ENCODE measurements at regions of chr4 and their contacts with region 1.

Region 1: GRCh38 chr4:83284193-83285054 is at the start of gene COQ2:
- DNase-seq: peak; percentile 82 to 97 (median 92)
- ATAC-seq: peak; percentile 92 to 94 (median 94)
- H3K4me3 ChIP-seq: peak within 1 kb of the TSS; percentile 76 to 86
- H3K4me3 Mint-ChIP-seq: peak within 1 kb of the TSS; percentile 94 to 99 (median 97)
- H3K27ac ChIP-seq: peak within 1 kb of the TSS; percentile 83
- H3K27ac Mint-ChIP-seq: peak within 1 kb of the TSS; percentile 96 to 98
- H3K4me1 ChIP-seq: peaks cover 6 to 9% of the 10 kb centered on the region in 2 experiments
- H3K4me1 Mint-ChIP-seq: peaks cover 39 to 42% (median 40%) of the 10 kb centered on the region in 3 donors
- H3K27me3 ChIP-seq: no peaks in the 10 kb centered on the region
- H3K27me3 Mint-ChIP-seq: no peaks in the 10 kb centered on the region
- total RNA-seq, gene COQ2: 4.7 to 9.7 (median 6.2) TPM

Region 2: GRCh38 chr4:82851885-82852750 is 432.3 kb before region 1 on chr4:
- CTCF ChIA-PET with region 1: interaction called in 1 of 2 experiments, 11 read pairs
- POLR2A ChIA-PET with region 1: no interaction called
- DNase-seq: peak in 1 of 35 experiments; percentile 59
- ATAC-seq: no peak
- H3K4me3 ChIP-seq: no peak overlapping the region
- H3K4me3 Mint-ChIP-seq: no peak overlapping the region
- H3K27ac ChIP-seq: no peak overlapping the region
- H3K27ac Mint-ChIP-seq: peak overlapping the region; percentile 17 to 45
- H3K4me1 ChIP-seq: no peaks in the 10 kb centered on the region
- H3K4me1 Mint-ChIP-seq: peaks cover 0 to 4% (median 2%) of the 10 kb centered on the region in 3 donors
- H3K27me3 ChIP-seq: no peaks in the 10 kb centered on the region
- H3K27me3 Mint-ChIP-seq: no peaks in the 10 kb centered on the region

Region 3: DNA sequence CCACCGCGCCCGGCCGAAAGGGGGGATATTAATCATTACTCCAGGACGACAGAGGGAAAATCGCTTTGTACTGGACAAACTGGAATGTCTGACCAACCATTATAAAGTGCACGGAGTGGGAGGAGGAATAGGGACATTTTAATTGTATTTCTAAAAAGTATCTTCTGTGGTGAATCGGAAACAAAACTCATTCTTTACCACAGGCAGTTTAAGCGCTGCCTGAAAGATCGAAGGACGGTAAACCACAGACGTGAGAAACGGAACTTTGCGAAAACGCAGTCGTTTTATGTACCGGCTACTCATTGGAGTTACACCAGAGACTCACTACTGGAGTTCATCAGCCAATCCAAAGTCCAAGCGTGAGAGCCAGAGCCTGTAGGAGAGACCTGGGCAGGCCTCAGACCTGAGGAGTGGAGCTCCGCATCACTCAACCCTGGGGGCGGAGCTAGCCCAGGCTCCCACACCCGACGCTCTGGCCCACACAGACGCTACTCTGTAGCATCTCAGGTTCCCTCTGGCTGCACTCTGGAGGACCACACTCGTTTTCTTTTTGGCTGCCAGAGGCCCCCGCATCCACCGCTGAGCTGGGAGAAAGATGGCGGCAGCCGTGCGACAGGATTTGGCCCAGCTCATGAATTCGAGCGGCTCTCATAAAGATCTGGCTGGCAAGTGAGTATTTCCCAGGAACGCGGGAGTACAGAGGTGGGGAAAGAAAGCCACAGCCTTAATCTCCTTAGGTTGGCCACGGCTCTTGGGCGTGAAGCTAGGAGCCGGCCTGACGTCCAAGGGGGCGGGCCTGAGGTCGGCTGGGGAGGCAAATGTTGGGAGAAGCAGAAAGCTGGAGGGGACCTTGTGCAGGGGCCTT is 249.6 kb before region 1 on chr4 and contains the start of gene COPS4:
- CTCF ChIA-PET with region 1: interaction called, 7 to 16 read pairs
- POLR2A ChIA-PET with region 1: interaction called, 4 to 6 read pairs
- DNase-seq: peak; percentile 80 to 99 (median 95)
- ATAC-seq: peak; percentile 96 to 99 (median 96)
- H3K4me3 ChIP-seq: peak within 1 kb of the TSS; percentile 73 to 92
- H3K4me3 Mint-ChIP-seq: peak within 1 kb of the TSS; percentile 94 to 99 (median 97)
- H3K27ac ChIP-seq: peak within 1 kb of the TSS; percentile 77
- H3K27ac Mint-ChIP-seq: peak within 1 kb of the TSS; percentile 96 to 99
- H3K4me1 ChIP-seq: peaks cover 10 to 13% of the 10 kb centered on the region in 2 experiments
- H3K4me1 Mint-ChIP-seq: peaks cover 40 to 41% (median 40%) of the 10 kb centered on the region in 3 donors
- H3K27me3 ChIP-seq: no peaks in the 10 kb centered on the region
- H3K27me3 Mint-ChIP-seq: no peaks in the 10 kb centered on the region
- total RNA-seq, gene COPS4: 19.9 to 28.3 (median 22.2) TPM

Region 4: DNA sequence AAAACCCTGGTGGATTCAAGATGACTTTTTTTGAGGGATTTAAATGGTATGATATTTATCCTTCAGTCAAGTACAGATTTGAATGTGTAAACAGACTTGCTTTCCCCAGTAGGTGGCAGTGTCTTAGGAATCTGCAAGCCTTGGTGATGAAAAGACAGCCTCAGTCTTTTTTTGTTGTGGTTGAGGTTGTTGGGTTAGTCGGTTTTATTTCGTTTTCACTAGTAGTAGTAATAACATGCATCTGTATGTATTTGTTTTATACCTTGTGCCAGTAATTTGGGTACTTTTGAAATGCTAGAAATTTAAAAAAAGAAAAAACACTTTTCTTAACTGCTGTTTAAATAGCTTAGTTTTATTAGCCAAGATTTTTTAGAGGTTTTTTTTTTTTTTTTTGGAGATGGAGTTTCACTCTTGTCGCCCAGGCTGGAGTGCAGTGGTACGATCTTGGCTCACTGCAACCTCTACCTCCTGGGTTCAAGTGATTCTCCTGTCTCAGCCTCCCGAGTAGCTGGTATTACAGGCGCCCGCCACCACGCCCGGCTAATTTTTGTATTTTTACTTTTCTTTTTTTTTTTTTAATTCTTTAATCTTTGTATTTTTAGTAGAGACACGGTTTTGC is 210.2 kb before region 1 on chr4:
- CTCF ChIA-PET with region 1: interaction called, 5 to 71 read pairs
- POLR2A ChIA-PET with region 1: interaction called in 1 of 2 experiments, 5 read pairs
- DNase-seq: peak in 30 of 35 experiments; percentile 14 to 92 (median 54)
- ATAC-seq: peak; percentile 89 to 97 (median 92)
- H3K4me3 ChIP-seq: no peak overlapping the region
- H3K4me3 Mint-ChIP-seq: peak overlapping the region; percentile 47 to 67 (median 55)
- H3K27ac ChIP-seq: no peak overlapping the region
- H3K27ac Mint-ChIP-seq: peak overlapping the region; percentile 49 to 81
- H3K4me1 ChIP-seq: peaks cover 0 to 7% of the 10 kb centered on the region in 2 experiments
- H3K4me1 Mint-ChIP-seq: peaks cover 5 to 28% (median 18%) of the 10 kb centered on the region in 3 donors
- H3K27me3 ChIP-seq: no peaks in the 10 kb centered on the region
- H3K27me3 Mint-ChIP-seq: no peaks in the 10 kb centered on the region

Region 5: DNA sequence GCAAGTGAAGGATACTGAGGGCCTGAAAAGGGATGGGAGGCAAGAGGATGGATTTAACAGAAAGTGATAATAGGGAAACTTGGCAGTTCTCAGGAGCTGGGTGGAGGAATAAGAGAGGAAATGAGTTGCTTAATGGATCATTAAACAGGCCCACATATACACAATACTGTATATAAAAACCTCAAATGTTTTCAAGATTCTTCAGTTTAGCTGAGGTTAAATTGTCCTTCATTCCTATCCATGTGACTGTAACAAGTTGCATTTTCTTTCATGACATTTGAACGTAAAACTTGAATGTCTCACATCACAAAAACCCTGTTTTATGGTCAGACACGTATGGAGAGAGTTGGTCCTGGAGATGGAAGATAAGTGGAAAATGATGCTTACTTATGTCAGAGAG is 93.4 kb before region 1 on chr4:
- CTCF ChIA-PET with region 1: no interaction called
- POLR2A ChIA-PET with region 1: no interaction called
- DNase-seq: no peak
- ATAC-seq: no peak
- H3K4me3 ChIP-seq: no peak overlapping the region
- H3K4me3 Mint-ChIP-seq: no peak overlapping the region
- H3K27ac ChIP-seq: no peak overlapping the region
- H3K27ac Mint-ChIP-seq: no peak overlapping the region
- H3K4me1 ChIP-seq: no peaks in the 10 kb centered on the region
- H3K4me1 Mint-ChIP-seq: peaks cover 2 to 20% (median 11%) of the 10 kb centered on the region in 3 donors
- H3K27me3 ChIP-seq: no peaks in the 10 kb centered on the region
- H3K27me3 Mint-ChIP-seq: no peaks in the 10 kb centered on the region

Region 6: DNA sequence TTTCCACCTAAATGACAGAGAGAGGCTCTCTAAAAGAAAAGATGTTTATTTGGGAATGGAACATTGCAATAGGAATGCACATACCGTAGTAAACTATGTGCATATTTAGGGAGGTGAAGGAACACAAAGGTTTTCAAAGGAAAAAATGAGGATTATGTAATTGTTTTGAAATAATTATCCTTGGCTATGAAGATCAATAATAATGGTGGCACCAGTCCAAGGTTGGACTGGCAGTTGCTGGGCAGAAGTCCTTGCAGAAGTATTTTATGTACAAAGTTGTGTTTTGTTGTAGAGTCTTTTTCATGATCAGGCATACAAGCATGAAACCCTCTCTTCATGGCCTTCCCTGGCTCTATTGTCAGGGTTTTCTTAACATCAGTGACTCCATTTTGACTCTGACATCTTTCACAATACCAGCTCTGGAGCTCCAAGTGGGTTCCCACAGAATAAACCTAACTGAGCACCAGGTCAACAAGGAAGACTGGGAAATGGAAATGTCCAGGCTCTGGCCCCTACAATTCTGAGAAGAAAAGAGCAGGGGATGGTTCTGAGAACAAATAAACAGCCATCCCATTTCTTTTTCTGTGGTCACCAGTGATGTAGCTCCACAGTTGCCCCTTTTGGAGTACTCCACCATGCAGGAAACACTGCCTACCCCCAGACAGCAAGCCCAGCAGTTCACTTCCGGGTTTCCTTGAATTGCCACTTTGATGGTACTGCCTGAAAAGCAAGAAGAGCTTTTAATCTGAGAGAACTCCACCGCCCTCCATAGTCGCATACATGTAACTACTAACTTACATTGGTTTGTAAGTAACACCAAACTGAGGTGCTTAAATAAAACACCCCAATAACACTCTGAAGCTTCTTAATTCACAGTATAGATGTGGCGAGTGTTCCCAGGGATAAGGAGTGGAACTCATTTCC is 103.6 kb after region 1 on chr4:
- CTCF ChIA-PET with region 1: interaction called, 3 to 11 read pairs
- POLR2A ChIA-PET with region 1: no interaction called
- DNase-seq: peak in 28 of 35 experiments; percentile 1 to 55 (median 19)
- ATAC-seq: peak; percentile 63 to 93 (median 84)
- H3K4me3 ChIP-seq: no peak overlapping the region
- H3K4me3 Mint-ChIP-seq: no peak overlapping the region
- H3K27ac ChIP-seq: no peak overlapping the region
- H3K27ac Mint-ChIP-seq: peak overlapping the region; percentile 31 to 58
- H3K4me1 ChIP-seq: peaks cover 3 to 7% of the 10 kb centered on the region in 2 experiments
- H3K4me1 Mint-ChIP-seq: peaks cover 13 to 23% (median 23%) of the 10 kb centered on the region in 3 donors
- H3K27me3 ChIP-seq: no peaks in the 10 kb centered on the region
- H3K27me3 Mint-ChIP-seq: no peaks in the 10 kb centered on the region